ENCODE measurements at regions of chr15 and their contacts with region 1.

Region 1: DNA sequence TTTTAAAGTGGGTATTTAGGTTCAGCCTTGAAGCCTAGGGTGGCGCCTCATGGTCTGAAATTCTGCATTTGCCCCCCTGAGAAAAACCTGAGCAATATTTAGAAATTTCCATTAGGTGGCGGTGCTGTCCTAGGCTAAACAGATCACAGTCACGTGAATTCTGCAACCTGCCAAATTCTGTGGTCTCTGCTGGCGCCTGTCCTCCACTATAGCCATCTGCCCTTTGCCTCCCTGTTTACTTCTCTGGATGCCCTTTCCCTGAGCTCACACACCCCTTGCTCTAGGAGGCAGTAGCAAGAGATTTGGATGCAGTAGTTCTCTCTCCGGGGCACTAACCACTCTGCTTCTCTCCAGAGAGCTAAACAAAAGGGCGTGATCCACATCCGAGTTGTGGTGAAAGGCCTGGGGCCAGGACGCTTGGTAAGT is 9.1 kb downstream of the MRPS11 start:
- DNase-seq: no peak
- H3K4me3 ChIP-seq: no peak overlapping the region
- H3K27ac ChIP-seq: no peak overlapping the region
- H3K4me1 ChIP-seq: no peaks in the 10 kb centered on the region
- H3K27me3 ChIP-seq: no peaks in the 10 kb centered on the region
- CTCF ChIP-seq: peak; percentile 32 to 58

Region 2: GRCh38 chr15:88620995-88621772 is 144.5 kb after region 1 on chr15 and contains the start of gene AEN:
- CTCF ChIA-PET with region 1: no interaction called
- dilution Hi-C with region 1: no loop called
- in situ Hi-C with region 1: no loop called
- intact Hi-C with region 1: loop called (anchors 5 kb)
- DNase-seq: peak; percentile 95
- H3K4me3 ChIP-seq: peak within 1 kb of the TSS; percentile 76 to 88 (median 78)
- H3K27ac ChIP-seq: peak within 1 kb of the TSS; percentile 95
- H3K4me1 ChIP-seq: peaks cover 26% of the 10 kb centered on the region
- H3K27me3 ChIP-seq: no peaks in the 10 kb centered on the region
- CTCF ChIP-seq: no peak
- total RNA-seq, gene AEN: 31.8 to 42.7 TPM

Region 3: GRCh38 chr15:88834211-88834812 is 357.7 kb after region 1 on chr15:
- CTCF ChIA-PET with region 1: no interaction called
- dilution Hi-C with region 1: no loop called
- in situ Hi-C with region 1: no loop called
- intact Hi-C with region 1: loop called (anchors 10 kb)
- DNase-seq: peak; percentile 81
- H3K4me3 ChIP-seq: no peak overlapping the region
- H3K27ac ChIP-seq: no peak overlapping the region
- H3K4me1 ChIP-seq: peaks cover 20% of the 10 kb centered on the region
- H3K27me3 ChIP-seq: no peaks in the 10 kb centered on the region
- CTCF ChIP-seq: peak; percentile 48 to 70

Region 4: GRCh38 chr15:88878720-88879184 is 402.1 kb after region 1 on chr15:
- CTCF ChIA-PET with region 1: interaction called, 10 read pairs
- dilution Hi-C with region 1: no loop called
- in situ Hi-C with region 1: no loop called
- intact Hi-C with region 1: no loop called
- DNase-seq: no peak
- H3K4me3 ChIP-seq: no peak overlapping the region
- H3K27ac ChIP-seq: no peak overlapping the region
- H3K4me1 ChIP-seq: peaks cover 3% of the 10 kb centered on the region
- H3K27me3 ChIP-seq: no peaks in the 10 kb centered on the region
- CTCF ChIP-seq: peak; percentile 80 to 92

Region 5: DNA sequence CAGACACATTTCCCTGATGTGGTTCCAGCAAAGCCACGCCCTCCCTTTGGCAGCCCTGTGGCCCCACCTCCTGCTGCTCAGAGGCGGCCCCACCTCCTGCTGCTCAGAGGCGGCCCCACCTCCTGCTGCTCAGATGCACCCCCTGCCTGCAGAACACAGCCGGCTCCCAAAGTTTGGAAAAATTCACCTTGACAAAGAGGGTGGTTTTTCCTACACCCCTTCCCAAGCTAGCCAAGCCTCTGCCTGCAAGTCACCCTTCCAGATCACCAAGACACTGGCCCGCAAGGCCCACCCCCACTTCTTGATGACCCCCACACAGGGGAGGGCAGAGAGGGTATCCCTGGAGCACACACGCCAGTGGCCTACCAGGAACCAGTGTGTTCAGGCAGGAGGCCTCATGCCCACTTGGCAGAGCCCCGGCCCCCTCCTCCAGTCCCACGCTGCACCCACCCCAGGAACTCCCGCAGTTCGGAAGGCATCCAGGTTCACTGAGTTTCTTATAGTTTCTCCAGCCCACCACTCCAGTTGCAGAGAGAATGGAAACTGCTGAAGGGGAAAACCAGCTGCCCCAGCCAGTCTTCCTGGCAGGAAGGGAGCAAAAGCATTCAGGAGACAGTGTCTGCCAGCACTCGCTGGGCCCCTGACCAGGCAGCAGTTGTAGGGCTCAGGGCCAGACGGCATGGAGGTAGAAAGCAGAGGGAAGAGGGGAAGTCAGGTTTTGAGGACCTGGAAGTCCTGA is 421.0 kb after region 1 on chr15:
- CTCF ChIA-PET with region 1: no interaction called
- dilution Hi-C with region 1: no loop called
- in situ Hi-C with region 1: no loop called
- intact Hi-C with region 1: loop called (anchors 5 kb)
- DNase-seq: peak; percentile 81
- H3K4me3 ChIP-seq: no peak overlapping the region
- H3K27ac ChIP-seq: no peak overlapping the region
- H3K4me1 ChIP-seq: peaks cover 18% of the 10 kb centered on the region
- H3K27me3 ChIP-seq: no peaks in the 10 kb centered on the region
- CTCF ChIP-seq: peak; percentile 38 to 74

Measured in mammary epithelial cell (primary cell).